ENCODE measurements at regions of chr18 and their contacts with region 1.

Region 1: GRCh38 chr18:6821356-6821755 is 91.8 kb downstream of the ARHGAP28 start:
- DNase-seq: no peak
- H3K4me3 ChIP-seq: no peak overlapping the region
- H3K27ac ChIP-seq: peak overlapping the region in 1 of 2 donors; percentile 19
- H3K4me1 ChIP-seq: no peaks in the 10 kb centered on the region
- H3K27me3 ChIP-seq: no peaks in the 10 kb centered on the region
- CTCF ChIP-seq: no peak

Region 2: GRCh38 chr18:6764382-6764781 is 57.0 kb before region 1 on chr18:
- intact Hi-C with region 1: loop called (anchors 2 kb)
- DNase-seq: no peak
- H3K4me3 ChIP-seq: no peak overlapping the region
- H3K27ac ChIP-seq: no peak overlapping the region
- H3K4me1 ChIP-seq: no peaks in the 10 kb centered on the region
- H3K27me3 ChIP-seq: no peaks in the 10 kb centered on the region
- CTCF ChIP-seq: no peak

Measured in tibial artery (tissue), 4 donors.